ENCODE measurements at regions of chr17 and their contacts with region 1.

Region 1: GRCh38 chr17:47615766-47616424 is 33.8 kb upstream of the KPNB1 start:
- DNase-seq: no peak
- H3K4me3 Mint-ChIP-seq: no peak overlapping the region
- H3K27ac Mint-ChIP-seq: peak overlapping the region; percentile 27
- H3K4me1 Mint-ChIP-seq: peaks cover 17% of the 10 kb centered on the region
- H3K27me3 Mint-ChIP-seq: no peaks in the 10 kb centered on the region

Region 2: DNA sequence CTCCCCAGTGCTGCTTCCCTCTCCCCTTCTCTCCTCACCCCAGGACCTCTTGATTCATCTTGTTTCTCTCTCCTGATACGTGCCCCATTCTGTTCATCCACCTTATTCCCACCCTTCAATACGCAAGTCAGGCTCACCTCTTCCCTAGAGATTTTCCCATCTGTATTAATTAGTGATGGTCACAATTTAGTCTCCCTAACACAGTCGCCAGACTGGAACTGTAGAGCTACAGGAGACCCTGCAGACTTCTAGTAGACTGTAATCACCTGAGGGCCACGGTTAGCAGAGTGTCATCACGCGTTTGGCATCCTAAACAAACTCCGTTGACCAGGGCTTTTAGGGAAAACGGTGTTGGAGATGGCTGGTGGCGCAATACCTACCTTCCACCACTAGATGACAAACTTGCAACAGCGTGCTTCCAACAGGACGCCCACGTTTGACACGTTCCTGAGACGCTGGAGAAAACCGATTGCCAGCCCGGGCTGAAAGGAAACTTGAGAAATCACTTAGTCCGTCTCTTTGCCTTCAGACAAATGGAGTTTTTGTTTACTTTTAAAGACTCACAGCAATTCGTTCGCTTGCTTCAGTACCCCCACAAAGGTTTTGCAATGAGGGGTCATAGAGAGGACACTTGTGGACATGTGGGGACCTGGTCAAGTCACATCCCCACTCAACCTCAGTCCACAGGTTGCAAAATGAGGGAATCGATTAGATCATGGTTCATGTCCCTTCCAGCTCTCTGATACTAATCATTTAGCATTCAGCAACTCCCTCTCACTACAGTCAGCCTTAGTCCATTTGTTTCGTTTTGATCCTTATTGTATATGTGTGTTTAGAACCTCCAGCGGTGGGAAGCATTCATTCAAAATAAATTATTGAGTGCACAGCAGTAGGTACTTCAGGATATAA is 386.1 kb before region 1 on chr17:
- CTCF ChIA-PET with region 1: interaction called, 10 read pairs
- POLR2A ChIA-PET with region 1: interaction called, 3 read pairs
- DNase-seq: peak; percentile 76
- H3K4me3 Mint-ChIP-seq: peak overlapping the region; percentile 34
- H3K27ac Mint-ChIP-seq: no peak overlapping the region
- H3K4me1 Mint-ChIP-seq: peaks cover 13% of the 10 kb centered on the region
- H3K27me3 Mint-ChIP-seq: peaks cover 10% of the 10 kb centered on the region

Region 3: GRCh38 chr17:47363171-47363570 is 252.7 kb before region 1 on chr17:
- CTCF ChIA-PET with region 1: interaction called, 26 read pairs
- POLR2A ChIA-PET with region 1: no interaction called
- DNase-seq: no peak
- H3K4me3 Mint-ChIP-seq: no peak overlapping the region
- H3K27ac Mint-ChIP-seq: no peak overlapping the region
- H3K4me1 Mint-ChIP-seq: no peaks in the 10 kb centered on the region
- H3K27me3 Mint-ChIP-seq: peaks cover 1% of the 10 kb centered on the region

Region 4: GRCh38 chr17:47970704-47971463 is 355.0 kb after region 1 on chr17 and contains the start of gene CDK5RAP3:
- CTCF ChIA-PET with region 1: no interaction called
- POLR2A ChIA-PET with region 1: no interaction called
- DNase-seq: peak; percentile 100
- H3K4me3 Mint-ChIP-seq: peak within 1 kb of the TSS; percentile 91
- H3K27ac Mint-ChIP-seq: peak within 1 kb of the TSS; percentile 64
- H3K4me1 Mint-ChIP-seq: peaks cover 28% of the 10 kb centered on the region
- H3K27me3 Mint-ChIP-seq: no peaks in the 10 kb centered on the region
- total RNA-seq, gene CDK5RAP3: 194 to 205 TPM

Measured in activated CD4-positive, alpha-beta memory T cell treated with anti-CD3 and anti-CD28 coated beads, Interleukin-2, amount 10 ng/mL, durations not matched to agents 7 days and 5 days (primary cell).